Activated CD4-positive, alpha-beta T cell treated with anti-CD3 and anti-CD28 coated beads for 36 hours (primary cell): ENCODE measurements at regions of chr5 and their contacts with region 1.

Region 1: DNA sequence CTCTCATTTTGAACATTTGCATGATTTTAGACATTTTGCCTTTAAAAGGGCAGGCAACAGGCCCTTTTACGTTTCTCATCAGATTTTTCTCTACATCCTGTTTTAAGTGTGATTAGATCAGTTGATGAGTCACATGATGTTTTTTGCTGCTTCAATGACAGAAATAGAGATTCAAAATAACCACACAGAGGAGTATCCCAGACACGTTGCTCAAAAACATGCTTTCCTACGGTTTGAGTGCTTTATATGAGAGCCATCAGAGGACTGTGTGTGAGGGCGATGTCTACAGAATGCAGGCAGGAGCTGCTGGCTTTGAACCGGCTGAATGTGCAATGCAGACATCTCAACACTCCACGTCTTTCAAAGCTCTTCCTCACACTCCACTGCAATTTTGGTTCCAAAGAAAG is 42.1 kb downstream of the OTULIN start:
- DNase-seq: peak; percentile 51
- ATAC-seq: peak; percentile 95
- H3K4me3 Mint-ChIP-seq: peak overlapping the region; percentile 48
- H3K27ac Mint-ChIP-seq: peak overlapping the region; percentile 98
- H3K4me1 Mint-ChIP-seq: peaks cover 83% of the 10 kb centered on the region
- H3K27me3 Mint-ChIP-seq: no peaks in the 10 kb centered on the region

Region 2: GRCh38 chr5:14816999-14817761 is 110.6 kb after region 1 on chr5:
- CTCF ChIA-PET with region 1: interaction called, 4 read pairs
- POLR2A ChIA-PET with region 1: no interaction called
- intact Hi-C with region 1: loop called in 1 of 2 experiments (anchors 1 kb)
- DNase-seq: peak; percentile 76
- ATAC-seq: peak; percentile 87
- H3K4me3 Mint-ChIP-seq: peak overlapping the region; percentile 1
- H3K27ac Mint-ChIP-seq: peak overlapping the region; percentile 75
- H3K4me1 Mint-ChIP-seq: peaks cover 83% of the 10 kb centered on the region
- H3K27me3 Mint-ChIP-seq: no peaks in the 10 kb centered on the region